Activated CD4-positive, alpha-beta T cell treated with anti-CD3 and anti-CD28 coated beads, Interleukin-2, amount 10 ng/mL, durations not matched to agents 24 days and 14 days (primary cell): ENCODE measurements at regions of chr14 and their contacts with region 1.

Region 1: DNA sequence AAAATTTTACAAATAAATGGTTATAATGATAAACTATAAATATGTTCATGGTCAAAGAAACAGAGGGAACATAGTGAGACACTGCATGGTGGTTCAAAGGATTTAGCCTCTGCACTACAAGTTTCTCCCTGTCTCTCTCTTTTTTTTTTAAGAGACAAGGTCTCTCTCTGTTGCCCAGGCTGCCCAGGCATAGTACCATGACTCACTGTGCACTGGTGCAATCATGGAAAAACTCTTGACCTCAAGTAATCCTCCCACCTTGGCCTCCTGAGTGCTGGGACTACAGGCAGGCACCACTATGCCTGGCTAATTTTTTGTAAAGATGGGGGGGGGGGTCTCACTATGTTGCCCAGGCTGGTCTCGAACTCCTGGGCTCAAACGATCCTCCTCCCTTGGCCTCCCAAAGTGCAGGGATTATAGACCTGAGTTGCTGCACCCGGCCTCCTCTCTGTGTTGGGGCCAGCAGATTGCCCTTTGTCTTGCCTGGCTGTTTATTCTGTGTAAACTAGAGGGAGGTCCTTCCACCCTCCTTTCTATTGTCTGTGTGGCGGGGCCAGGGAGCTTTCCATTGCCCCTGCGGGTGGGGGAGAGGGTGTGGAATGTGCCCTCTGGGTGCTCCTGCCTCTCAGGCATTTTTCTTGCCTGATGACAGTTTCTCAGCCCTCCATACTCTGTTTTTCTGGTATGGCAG is 22.1 kb downstream of the MTHFD1 start:
- DNase-seq: no peak
- H3K4me3 Mint-ChIP-seq: no peak overlapping the region
- H3K27ac Mint-ChIP-seq: peak overlapping the region; percentile 72
- H3K4me1 Mint-ChIP-seq: peaks cover 35% of the 10 kb centered on the region
- H3K27me3 Mint-ChIP-seq: no peaks in the 10 kb centered on the region

Region 2: GRCh38 chr14:64444984-64445845 is 35.0 kb after region 1 on chr14:
- intact Hi-C with region 1: loop called (anchors 5 kb)
- DNase-seq: peak; percentile 78
- H3K4me3 Mint-ChIP-seq: peak overlapping the region; percentile 31
- H3K27ac Mint-ChIP-seq: peak overlapping the region; percentile 77
- H3K4me1 Mint-ChIP-seq: peaks cover 35% of the 10 kb centered on the region
- H3K27me3 Mint-ChIP-seq: no peaks in the 10 kb centered on the region

Region 3: GRCh38 chr14:64465191-64465822 is 55.1 kb after region 1 on chr14 and contains the start of gene AKAP5:
- intact Hi-C with region 1: no loop called
- DNase-seq: peak; percentile 90
- H3K4me3 Mint-ChIP-seq: peak within 1 kb of the TSS; percentile 86
- H3K27ac Mint-ChIP-seq: peak within 1 kb of the TSS; percentile 79
- H3K4me1 Mint-ChIP-seq: peaks cover 33% of the 10 kb centered on the region
- H3K27me3 Mint-ChIP-seq: peaks cover 5% of the 10 kb centered on the region
- total RNA-seq, gene AKAP5: 0.90 and 0.98 TPM in 2 replicates